Mammary epithelial cell (primary cell): ENCODE measurements at regions of chr3 and their contacts with region 1.

Region 1: DNA sequence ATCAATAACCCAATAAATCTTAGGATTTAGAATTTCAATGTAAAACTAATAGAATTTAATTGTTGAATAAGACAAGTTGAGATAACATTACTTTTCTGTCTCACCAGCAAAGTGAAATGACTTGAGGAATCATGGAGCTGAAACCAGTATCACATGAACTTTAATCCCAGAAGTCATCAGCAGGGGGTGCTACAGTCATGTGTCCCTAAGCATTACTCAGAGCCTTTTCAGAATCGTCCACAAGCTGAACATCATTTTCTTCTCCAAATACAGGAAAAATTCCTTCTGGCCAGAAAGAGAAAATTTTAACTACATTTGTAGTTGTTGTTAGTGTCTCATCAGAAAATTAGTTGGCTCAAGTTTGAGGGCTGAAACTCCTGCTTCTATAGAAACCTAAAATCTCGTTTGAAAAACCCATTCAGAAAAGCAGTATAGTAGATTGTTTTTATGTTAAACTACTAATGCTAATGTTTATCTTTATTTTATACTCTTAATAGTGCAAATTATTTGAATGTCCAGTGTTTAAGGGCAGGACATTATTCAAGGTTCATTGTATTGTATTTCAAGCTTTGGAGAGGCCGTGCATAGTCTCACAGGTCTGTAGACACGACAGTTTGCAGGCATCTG is 384.1 kb downstream of the PLOD2 start:
- DNase-seq: peak; percentile 35
- H3K4me3 ChIP-seq: no peak overlapping the region
- H3K27ac ChIP-seq: no peak overlapping the region
- H3K4me1 ChIP-seq: no peaks in the 10 kb centered on the region
- H3K27me3 ChIP-seq: peaks cover 1% of the 10 kb centered on the region
- CTCF ChIP-seq: peak; percentile 72 to 78

Region 2: DNA sequence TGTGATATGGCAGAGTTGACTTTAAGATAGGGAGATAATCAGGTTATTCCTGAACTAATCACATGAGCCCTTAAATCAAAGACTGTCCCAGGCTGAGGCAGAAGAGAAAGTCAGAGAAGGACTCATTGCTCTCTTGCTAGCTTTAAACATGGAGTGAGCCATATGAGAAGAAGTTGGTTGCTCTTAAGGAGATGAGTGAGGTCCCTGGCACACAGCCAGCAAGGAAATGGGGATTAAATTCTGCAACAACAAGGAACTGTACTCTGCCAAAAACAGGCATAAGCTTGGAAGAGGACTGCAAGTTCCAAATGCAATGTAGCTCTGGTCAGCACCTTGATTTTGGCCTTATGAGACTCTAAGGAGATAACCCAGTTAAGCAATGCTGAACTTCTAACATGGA is 72.9 kb before region 1 on chr3:
- CTCF ChIA-PET with region 1: no interaction called
- dilution Hi-C with region 1: no loop called
- in situ Hi-C with region 1: no loop called
- intact Hi-C with region 1: no loop called
- DNase-seq: no peak
- H3K4me3 ChIP-seq: no peak overlapping the region
- H3K27ac ChIP-seq: no peak overlapping the region
- H3K4me1 ChIP-seq: no peaks in the 10 kb centered on the region
- H3K27me3 ChIP-seq: no peaks in the 10 kb centered on the region
- CTCF ChIP-seq: no peak

Region 3: GRCh38 chr3:145727476-145727875 is 49.4 kb before region 1 on chr3:
- CTCF ChIA-PET with region 1: no interaction called
- dilution Hi-C with region 1: no loop called
- in situ Hi-C with region 1: no loop called
- intact Hi-C with region 1: no loop called
- DNase-seq: no peak
- H3K4me3 ChIP-seq: no peak overlapping the region
- H3K27ac ChIP-seq: no peak overlapping the region
- H3K4me1 ChIP-seq: no peaks in the 10 kb centered on the region
- H3K27me3 ChIP-seq: peaks cover 2% of the 10 kb centered on the region
- CTCF ChIP-seq: no peak

Region 4: GRCh38 chr3:145754605-145755289 is 22.1 kb before region 1 on chr3:
- CTCF ChIA-PET with region 1: no interaction called
- dilution Hi-C with region 1: no loop called
- in situ Hi-C with region 1: no loop called
- intact Hi-C with region 1: no loop called
- DNase-seq: no peak
- H3K4me3 ChIP-seq: no peak overlapping the region
- H3K27ac ChIP-seq: no peak overlapping the region
- H3K4me1 ChIP-seq: no peaks in the 10 kb centered on the region
- H3K27me3 ChIP-seq: no peaks in the 10 kb centered on the region
- CTCF ChIP-seq: no peak

Region 5: DNA sequence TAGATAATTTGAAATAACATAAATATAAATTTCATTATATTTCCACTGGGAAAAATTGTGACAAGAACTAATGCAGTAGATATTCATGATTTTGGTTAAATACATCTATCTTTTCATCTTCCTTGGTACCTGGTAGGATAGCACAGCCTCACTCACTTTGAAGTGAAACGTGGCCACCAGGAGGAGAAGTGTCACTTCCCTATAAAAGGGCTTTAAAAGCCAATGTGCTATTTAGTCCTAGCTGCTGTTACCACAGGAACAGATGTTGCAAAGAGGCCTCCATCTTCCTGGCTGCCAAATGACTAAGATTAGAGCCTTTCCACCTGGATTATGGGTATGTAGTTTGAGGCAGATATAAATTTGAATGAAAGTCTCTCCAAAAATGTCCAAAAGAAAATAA is 244.1 kb after region 1 on chr3:
- CTCF ChIA-PET with region 1: no interaction called
- dilution Hi-C with region 1: no loop called
- in situ Hi-C with region 1: loop called in 1 of 2 experiments (anchors 25 kb)
- intact Hi-C with region 1: loop called (anchors 2 kb)
- DNase-seq: no peak
- H3K4me3 ChIP-seq: no peak overlapping the region
- H3K27ac ChIP-seq: no peak overlapping the region
- H3K4me1 ChIP-seq: no peaks in the 10 kb centered on the region
- H3K27me3 ChIP-seq: no peaks in the 10 kb centered on the region
- CTCF ChIP-seq: no peak

Region 6: DNA sequence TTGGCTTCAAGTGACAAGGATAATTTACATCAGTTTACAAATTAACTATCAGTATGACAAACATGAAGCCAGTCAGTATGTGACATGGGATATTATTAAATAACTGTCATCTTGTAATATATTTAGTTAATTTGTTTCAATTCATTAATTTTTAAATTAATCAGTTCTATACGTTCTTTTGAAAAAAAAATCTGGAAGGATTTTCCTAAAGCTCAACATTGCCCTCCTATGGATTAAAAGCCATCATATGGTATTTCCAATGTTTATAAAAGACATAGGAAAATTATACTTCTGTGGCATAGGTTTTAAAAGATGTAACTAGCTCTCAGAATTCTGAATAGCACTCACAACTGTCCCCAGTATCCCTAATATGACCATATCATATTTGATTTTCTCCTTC is 249.7 kb after region 1 on chr3:
- CTCF ChIA-PET with region 1: no interaction called
- dilution Hi-C with region 1: no loop called
- in situ Hi-C with region 1: loop called in 1 of 2 experiments (anchors 25 kb)
- intact Hi-C with region 1: loop called (anchors 2 kb)
- DNase-seq: no peak
- H3K4me3 ChIP-seq: no peak overlapping the region
- H3K27ac ChIP-seq: no peak overlapping the region
- H3K4me1 ChIP-seq: no peaks in the 10 kb centered on the region
- H3K27me3 ChIP-seq: no peaks in the 10 kb centered on the region
- CTCF ChIP-seq: peak in 1 of 2 donors; percentile 25

Region 7: DNA sequence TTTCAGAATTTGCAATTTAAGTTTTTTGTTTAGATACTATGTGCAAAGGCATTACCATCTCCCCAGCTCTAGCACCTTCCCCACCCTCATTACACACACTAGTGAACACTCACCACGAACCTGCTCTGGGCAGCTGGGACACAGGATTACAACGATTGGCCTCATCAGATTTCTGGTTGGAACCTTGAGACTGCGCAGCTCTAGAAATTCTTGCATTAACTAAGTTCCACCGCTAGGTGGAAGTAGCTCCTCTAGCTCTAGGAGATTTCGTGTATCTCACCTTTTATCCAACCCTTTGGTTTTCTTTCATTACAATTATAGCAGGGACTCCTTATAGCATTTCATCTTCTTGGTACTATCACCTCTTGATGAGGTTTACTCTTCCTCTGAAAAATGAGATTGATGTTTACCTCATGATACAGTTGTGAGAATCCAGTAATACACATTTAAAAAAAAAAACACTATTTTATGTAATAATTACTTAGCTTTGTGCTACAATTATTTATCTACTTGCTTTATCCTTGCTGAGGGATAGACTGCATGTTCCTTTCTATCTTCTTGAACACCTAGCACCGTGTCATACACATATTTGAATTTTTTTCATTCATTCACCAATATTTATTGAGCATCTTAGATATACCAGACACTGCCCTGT is 412.8 kb after region 1 on chr3:
- CTCF ChIA-PET with region 1: no interaction called
- dilution Hi-C with region 1: no loop called
- in situ Hi-C with region 1: no loop called
- intact Hi-C with region 1: loop called (anchors 2 kb)
- DNase-seq: peak; percentile 54
- H3K4me3 ChIP-seq: no peak overlapping the region
- H3K27ac ChIP-seq: no peak overlapping the region
- H3K4me1 ChIP-seq: peaks cover 3% of the 10 kb centered on the region
- H3K27me3 ChIP-seq: no peaks in the 10 kb centered on the region
- CTCF ChIP-seq: peak; percentile 78 to 80